GM10248 (cell line): ENCODE measurements at regions of chr2 and their contacts with region 1.

Region 1: GRCh38 chr2:172465417-172466334 is 38.3 kb downstream of the ITGA6 start:
- DNase-seq: peak; percentile 56
- CTCF ChIP-seq: peak; percentile 74

Region 2: GRCh38 chr2:171574149-171574795 is 891.4 kb before region 1 on chr2:
- CTCF ChIA-PET with region 1: interaction called, 12 read pairs
- POLR2A ChIA-PET with region 1: no interaction called
- DNase-seq: peak; percentile 89
- CTCF ChIP-seq: peak; percentile 90

Region 3: GRCh38 chr2:171703574-171704347 is 761.9 kb before region 1 on chr2:
- CTCF ChIA-PET with region 1: interaction called, 17 read pairs
- POLR2A ChIA-PET with region 1: no interaction called
- DNase-seq: peak; percentile 47
- CTCF ChIP-seq: peak; percentile 37

Region 4: DNA sequence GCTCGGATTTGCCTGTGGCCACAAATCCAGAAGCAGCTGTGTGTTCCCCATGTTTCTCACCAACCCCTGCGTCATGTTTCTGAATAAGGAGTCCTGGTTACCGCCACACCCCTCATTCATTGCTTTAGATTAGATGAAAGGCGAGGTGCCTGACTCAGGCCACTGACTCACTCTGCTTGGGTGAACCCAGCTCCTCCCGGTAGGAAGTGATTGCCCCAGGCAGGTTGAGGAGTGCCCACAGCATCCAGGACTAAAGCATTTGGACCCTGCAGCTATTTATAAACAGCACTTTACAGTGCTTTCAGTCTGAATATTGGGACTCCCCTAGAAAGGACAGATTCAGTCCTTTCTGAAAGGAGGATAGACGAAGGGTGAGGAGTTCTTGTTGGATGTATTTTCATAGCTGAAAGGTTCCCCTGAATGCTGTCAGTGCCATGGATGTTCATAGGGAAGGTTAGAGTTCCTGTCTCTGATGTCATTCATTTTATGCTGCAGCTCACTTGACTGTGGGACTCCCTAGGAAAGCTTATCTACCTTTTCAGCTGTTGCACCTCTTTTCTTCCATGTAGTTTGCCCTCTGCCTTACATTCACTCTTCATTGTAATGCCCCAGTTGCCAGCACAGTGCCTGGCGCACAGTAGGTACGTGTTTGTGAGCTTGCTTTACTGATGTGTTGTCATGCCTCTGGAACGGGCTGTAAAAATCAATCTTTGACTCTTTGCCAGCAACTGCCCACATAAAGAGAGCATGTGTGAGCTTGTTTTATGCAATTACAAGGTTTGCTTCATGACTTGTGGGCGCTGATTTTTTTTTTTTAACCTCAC is 23.4 kb before region 1 on chr2:
- CTCF ChIA-PET with region 1: interaction called, 34 read pairs
- POLR2A ChIA-PET with region 1: no interaction called
- DNase-seq: no peak
- CTCF ChIP-seq: no peak

Region 5: GRCh38 chr2:172452845-172453244 is 12.8 kb before region 1 on chr2:
- CTCF ChIA-PET with region 1: interaction called, 21 read pairs
- POLR2A ChIA-PET with region 1: no interaction called
- DNase-seq: no peak
- CTCF ChIP-seq: no peak

Region 6: GRCh38 chr2:172480301-172481218 is 14.9 kb after region 1 on chr2:
- CTCF ChIA-PET with region 1: interaction called, 10 read pairs
- POLR2A ChIA-PET with region 1: no interaction called
- DNase-seq: no peak
- CTCF ChIP-seq: no peak

Region 7: DNA sequence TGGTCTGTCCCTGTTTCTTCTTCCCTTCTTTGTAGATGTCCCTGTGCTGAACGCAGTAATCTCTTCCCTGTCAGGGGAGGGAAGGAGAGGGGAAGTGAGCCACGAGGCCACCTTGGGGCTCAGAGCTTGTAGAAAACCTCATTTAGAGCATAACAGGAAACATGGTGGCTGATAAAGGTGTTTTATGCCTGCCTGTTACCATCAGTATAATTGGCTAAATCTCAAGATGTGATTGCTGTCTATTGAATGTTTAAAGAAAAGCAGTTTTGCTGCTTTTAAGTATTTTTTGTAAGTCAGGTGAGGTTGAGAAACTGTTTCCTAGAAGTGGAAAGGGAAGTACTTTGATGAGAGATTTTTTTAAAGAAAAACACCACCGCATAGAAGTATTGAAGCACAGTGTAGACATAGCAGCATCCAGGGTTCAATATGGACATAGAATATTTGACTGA is 30.5 kb after region 1 on chr2:
- CTCF ChIA-PET with region 1: interaction called, 12 read pairs
- POLR2A ChIA-PET with region 1: no interaction called
- DNase-seq: no peak
- CTCF ChIP-seq: no peak